PC-9 (cell line): ENCODE measurements at regions of chr9 and their contacts with region 1.

Region 1: DNA sequence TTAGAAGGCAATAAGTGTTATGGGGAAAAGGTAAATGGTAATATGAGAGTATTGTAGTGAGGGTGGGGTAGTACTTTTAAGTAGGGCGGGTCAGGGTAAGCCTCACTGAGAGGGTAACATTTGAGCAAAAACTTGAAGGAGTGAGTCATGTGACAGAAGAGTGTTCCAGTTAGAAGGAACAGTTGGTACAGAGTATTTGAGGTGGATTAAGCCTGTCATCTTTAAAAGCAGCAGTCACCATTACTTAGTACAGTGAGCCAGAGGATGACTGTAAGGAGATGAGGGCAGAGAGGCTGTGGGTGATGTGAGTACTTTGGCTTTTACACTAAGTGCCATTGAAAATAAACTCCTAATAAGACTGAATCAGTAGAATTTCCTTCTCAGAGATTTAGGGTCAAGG is 54.8 kb downstream of the UBAP1 start:
- DNase-seq: no peak
- H3K4me3 ChIP-seq: no peak overlapping the region
- H3K27ac ChIP-seq: no peak overlapping the region
- H3K4me1 ChIP-seq: no peaks in the 10 kb centered on the region
- H3K27me3 ChIP-seq: no peaks in the 10 kb centered on the region
- CTCF ChIP-seq: no peak

Region 2: DNA sequence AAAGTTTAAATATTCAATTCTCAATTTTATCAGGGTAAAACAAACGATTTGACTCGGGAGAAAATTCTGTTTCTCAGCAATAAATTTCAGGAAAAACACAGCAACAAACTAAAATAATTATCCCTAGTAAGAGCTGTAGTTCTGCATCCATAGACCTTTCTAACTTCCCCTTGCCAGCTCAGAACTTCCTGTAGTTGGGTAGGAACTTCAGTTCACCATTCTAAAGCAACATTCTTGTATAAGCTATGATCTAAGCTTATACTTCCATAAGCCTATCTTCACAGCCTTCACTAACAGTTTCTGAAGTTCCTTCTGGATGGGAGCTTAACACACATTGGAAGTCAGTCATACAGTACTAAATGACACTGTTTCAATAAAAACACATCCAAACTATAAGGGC is 281.6 kb before region 1 on chr9:
- CTCF ChIA-PET with region 1: interaction called, 10 read pairs
- POLR2A ChIA-PET with region 1: no interaction called
- intact Hi-C with region 1: no loop called
- DNase-seq: no peak
- H3K4me3 ChIP-seq: no peak overlapping the region
- H3K27ac ChIP-seq: no peak overlapping the region
- H3K4me1 ChIP-seq: no peaks in the 10 kb centered on the region
- H3K27me3 ChIP-seq: no peaks in the 10 kb centered on the region
- CTCF ChIP-seq: no peak

Region 3: GRCh38 chr9:34106110-34106509 is 127.6 kb before region 1 on chr9:
- CTCF ChIA-PET with region 1: no interaction called
- POLR2A ChIA-PET with region 1: no interaction called
- intact Hi-C with region 1: no loop called
- DNase-seq: no peak
- H3K4me3 ChIP-seq: no peak overlapping the region
- H3K27ac ChIP-seq: no peak overlapping the region
- H3K4me1 ChIP-seq: no peaks in the 10 kb centered on the region
- H3K27me3 ChIP-seq: no peaks in the 10 kb centered on the region
- CTCF ChIP-seq: no peak